ENCODE measurements at regions of chr19 and their contacts with region 1.

Region 1: GRCh38 chr19:40974633-40975037 is 16.4 kb upstream of the CYP2B6 start:
- DNase-seq: peak; percentile 71 to 77
- ATAC-seq: no peak
- H3K4me3 ChIP-seq: no peak overlapping the region
- H3K27ac ChIP-seq: no peak overlapping the region
- H3K4me1 ChIP-seq: no peaks in the 10 kb centered on the region
- H3K27me3 ChIP-seq: no peaks in the 10 kb centered on the region

Region 2: GRCh38 chr19:41144403-41144802 is 169.8 kb after region 1 on chr19:
- intact Hi-C with region 1: loop called (anchors 5 to 10 kb)
- DNase-seq: peak; percentile 87 to 88
- ATAC-seq: peak; percentile 68
- H3K4me3 ChIP-seq: no peak overlapping the region
- H3K27ac ChIP-seq: no peak overlapping the region
- H3K4me1 ChIP-seq: no peaks in the 10 kb centered on the region
- H3K27me3 ChIP-seq: no peaks in the 10 kb centered on the region

Measured in aorta (tissue), 5 donors.